Pancreas (tissue), 10 donors: ENCODE measurements at regions of chr20 and their contacts with region 1.

Region 1: GRCh38 chr20:17504898-17505635 is 26.1 kb downstream of the BFSP1 start:
- DNase-seq: peak in 5 of 6 donors; percentile 41 to 80 (median 48)
- ATAC-seq: peak; percentile 79 to 92 (median 90)
- H3K4me3 ChIP-seq: peak overlapping the region; percentile 13 to 48 (median 31)
- H3K27ac ChIP-seq: no peak overlapping the region
- H3K4me1 ChIP-seq: no peaks in the 10 kb centered on the region
- H3K27me3 ChIP-seq: no peaks in the 10 kb centered on the region
- CTCF ChIP-seq: peak; percentile 26 to 66 (median 51)

Region 2: GRCh38 chr20:17995967-17996819 is 491.1 kb after region 1 on chr20:
- intact Hi-C with region 1: loop called in 2 of 3 experiments (anchors 5 kb)
- DNase-seq: peak in 2 of 6 donors; percentile 24 to 61
- ATAC-seq: peak; percentile 65 to 92 (median 86)
- H3K4me3 ChIP-seq: no peak overlapping the region
- H3K27ac ChIP-seq: no peak overlapping the region
- H3K4me1 ChIP-seq: peaks cover 0 to 3% (median 0%) of the 10 kb centered on the region in 3 donors
- H3K27me3 ChIP-seq: no peaks in the 10 kb centered on the region
- CTCF ChIP-seq: peak; percentile 73 to 94 (median 90)

Region 3: DNA sequence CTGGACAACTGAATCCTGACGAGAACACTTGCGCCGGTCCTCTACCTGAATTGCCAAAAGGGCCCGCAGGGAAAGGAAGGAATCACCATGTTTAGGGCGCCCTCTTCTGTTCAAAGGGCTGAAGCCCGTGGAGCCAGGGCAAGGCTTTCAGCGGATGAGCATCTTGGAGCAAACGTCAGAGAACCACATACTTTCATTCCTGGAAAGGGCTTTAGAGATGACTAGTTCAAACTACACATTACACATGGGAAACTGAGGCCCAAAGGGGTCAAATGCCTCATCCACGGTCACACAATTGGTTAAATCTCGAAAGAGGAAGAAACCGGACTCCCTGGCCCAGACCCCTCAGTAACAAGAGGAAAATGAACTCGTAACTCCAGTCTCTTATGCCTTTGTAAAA is 771.8 kb after region 1 on chr20:
- intact Hi-C with region 1: loop called in 2 of 3 experiments (anchors 10 kb)
- DNase-seq: peak; percentile 48 to 79 (median 67)
- ATAC-seq: peak; percentile 84 to 99 (median 96)
- H3K4me3 ChIP-seq: no peak overlapping the region
- H3K27ac ChIP-seq: no peak overlapping the region
- H3K4me1 ChIP-seq: no peaks in the 10 kb centered on the region
- H3K27me3 ChIP-seq: peaks cover 0 to 10% (median 5%) of the 10 kb centered on the region in 4 donors
- CTCF ChIP-seq: peak in 3 of 4 donors; percentile 51 to 63 (median 63)

Region 4: GRCh38 chr20:18287915-18288748 is 783.1 kb after region 1 on chr20 and contains the start of gene ZNF133:
- intact Hi-C with region 1: loop called in 1 of 3 experiments (anchors 10 kb)
- DNase-seq: peak; percentile 95 to 99 (median 96)
- ATAC-seq: peak; percentile 97 to 99 (median 98)
- H3K4me3 ChIP-seq: peak within 1 kb of the TSS; percentile 58 to 78 (median 76)
- H3K27ac ChIP-seq: peak within 1 kb of the TSS; percentile 87 to 94 (median 90)
- H3K4me1 ChIP-seq: no peaks in the 10 kb centered on the region
- H3K27me3 ChIP-seq: no peaks in the 10 kb centered on the region
- CTCF ChIP-seq: no peak
- total RNA-seq, gene ZNF133: 6.0 to 8.9 (median 6.5) TPM